ENCODE measurements at regions of chr4 and their contacts with region 1.

Region 1: GRCh38 chr4:158624889-158625478 is 46.7 kb downstream of the C4orf46 start:
- DNase-seq: no peak

Region 2: DNA sequence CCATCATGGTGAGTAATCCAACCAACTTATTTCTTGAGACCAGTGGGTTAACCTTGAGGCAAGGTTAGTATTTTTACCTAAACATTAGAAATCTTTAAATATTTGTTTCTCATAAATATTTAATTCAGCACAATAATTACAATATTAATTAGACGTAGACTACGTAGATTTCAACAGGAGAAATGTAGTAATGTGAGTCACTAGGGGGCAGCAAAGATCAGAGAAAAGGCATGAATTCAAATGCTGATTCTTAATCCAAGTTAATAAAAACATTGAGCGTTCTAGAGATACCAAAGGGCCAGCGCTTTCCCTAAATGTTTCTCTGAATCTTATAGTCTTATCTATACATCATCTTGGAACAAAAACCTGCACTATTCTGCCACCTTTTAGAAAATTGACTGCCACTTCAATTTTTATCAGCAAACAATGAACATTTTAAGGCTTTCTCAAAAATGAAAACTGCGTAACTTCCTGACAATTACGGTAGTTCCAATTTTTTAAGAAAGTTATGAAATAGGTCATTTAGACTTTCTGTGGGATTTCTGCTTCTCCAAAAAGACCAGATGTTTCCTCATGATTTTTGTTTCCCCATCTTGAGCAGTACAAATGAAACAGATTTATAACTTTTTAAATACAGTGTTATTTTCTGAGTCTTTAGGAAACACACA is 632.8 kb before region 1 on chr4:
- intact Hi-C with region 1: loop called (anchors 5 kb)
- DNase-seq: peak in 1 of 10 donors; percentile 46

Region 3: DNA sequence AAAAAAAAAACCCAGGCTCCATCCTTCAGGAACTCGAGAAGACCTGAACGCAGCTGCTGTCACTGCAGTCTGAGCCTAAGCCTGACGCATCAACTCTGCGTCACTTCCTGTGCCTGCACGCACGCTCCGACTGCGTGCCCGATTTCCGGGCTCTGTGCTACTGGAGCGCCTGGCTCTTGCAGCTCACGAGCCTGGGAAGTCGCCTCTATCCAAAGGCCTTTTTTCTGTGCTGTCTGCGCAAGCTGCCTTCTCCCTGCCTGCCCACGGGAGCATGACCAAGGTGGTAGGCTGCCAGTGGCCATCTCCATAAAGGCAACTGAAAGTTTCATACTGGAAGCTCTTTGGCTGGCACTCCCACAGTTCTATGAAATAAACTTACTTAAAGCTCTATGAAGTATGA is 442.2 kb before region 1 on chr4:
- intact Hi-C with region 1: loop called (anchors 5 kb)
- DNase-seq: peak in 7 of 10 donors; percentile 14 to 84 (median 38)

Region 4: DNA sequence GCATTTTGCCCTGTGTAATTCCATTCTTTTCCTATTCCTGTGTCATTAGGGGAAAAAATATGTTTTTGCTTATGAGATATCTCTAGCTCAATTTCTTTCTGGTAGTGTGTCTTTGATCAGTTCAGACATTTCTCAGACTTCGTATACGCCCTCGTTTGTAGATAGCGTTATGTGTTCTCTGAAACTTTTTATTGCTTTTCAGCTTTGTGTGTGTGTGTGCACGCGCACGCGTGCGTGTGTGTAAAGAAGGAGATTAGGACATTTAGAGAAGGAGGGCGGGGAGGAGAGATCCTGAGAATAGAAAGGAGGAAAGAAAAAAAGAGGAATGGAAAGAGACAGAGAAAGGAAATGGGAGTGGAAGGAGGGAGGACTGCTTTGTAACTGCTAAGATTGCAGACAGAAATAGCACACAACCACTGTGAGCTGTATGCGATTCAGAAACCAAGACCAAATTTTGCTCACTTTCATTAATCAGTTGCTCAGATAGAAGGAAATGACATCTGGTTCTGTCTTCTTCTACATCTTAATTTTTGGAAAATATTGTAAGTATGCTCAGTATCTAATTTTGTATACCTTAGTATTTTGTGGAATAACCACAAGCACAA is 103.4 kb before region 1 on chr4 and contains the start of gene RXFP1:
- intact Hi-C with region 1: no loop called
- DNase-seq: no peak

Region 5: DNA sequence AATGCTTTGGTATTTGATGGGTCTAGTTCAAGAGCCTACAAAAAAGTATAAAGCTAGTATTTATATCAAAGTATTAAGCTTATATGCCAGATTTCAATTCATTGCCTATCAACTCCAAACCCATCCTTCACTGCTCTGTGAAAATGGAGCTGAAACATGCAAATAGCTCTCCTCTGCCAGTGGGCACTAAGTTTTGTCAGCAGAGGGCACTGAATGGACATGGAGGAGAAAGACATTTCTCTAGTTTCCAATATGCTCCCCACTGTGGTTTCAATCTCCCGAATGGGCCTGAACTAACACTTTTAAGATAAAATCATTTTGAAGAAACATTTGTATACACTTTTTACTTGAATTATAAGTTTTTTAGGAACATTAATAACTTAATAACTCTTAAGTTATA is 85.8 kb after region 1 on chr4:
- intact Hi-C with region 1: no loop called
- DNase-seq: no peak

Region 6: DNA sequence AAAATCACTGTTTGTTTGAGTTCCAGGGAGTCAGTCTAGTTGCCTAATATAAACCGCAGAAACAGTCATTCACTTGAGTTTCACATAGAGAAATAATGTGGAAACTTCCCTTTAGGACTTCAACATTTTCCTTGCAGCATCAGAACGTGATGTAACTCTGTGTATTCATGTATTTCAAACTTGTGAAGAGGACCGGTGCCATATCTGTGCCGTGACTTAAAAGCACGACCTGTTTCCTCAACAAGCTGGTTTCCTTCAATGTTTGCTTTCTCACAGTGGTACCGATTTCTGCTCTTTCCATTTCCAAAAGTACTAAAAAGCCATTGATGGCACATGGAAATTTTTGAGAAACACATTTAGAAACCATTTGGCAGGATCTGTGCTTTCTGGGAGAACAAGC is 311.3 kb after region 1 on chr4:
- intact Hi-C with region 1: no loop called
- DNase-seq: peak in 3 of 10 donors; percentile 13 to 55 (median 26)

Measured in posterior cingulate gyrus (tissue), 11 donors.